ENCODE measurements at regions of chr3 and their contacts with region 1.

Region 1: DNA sequence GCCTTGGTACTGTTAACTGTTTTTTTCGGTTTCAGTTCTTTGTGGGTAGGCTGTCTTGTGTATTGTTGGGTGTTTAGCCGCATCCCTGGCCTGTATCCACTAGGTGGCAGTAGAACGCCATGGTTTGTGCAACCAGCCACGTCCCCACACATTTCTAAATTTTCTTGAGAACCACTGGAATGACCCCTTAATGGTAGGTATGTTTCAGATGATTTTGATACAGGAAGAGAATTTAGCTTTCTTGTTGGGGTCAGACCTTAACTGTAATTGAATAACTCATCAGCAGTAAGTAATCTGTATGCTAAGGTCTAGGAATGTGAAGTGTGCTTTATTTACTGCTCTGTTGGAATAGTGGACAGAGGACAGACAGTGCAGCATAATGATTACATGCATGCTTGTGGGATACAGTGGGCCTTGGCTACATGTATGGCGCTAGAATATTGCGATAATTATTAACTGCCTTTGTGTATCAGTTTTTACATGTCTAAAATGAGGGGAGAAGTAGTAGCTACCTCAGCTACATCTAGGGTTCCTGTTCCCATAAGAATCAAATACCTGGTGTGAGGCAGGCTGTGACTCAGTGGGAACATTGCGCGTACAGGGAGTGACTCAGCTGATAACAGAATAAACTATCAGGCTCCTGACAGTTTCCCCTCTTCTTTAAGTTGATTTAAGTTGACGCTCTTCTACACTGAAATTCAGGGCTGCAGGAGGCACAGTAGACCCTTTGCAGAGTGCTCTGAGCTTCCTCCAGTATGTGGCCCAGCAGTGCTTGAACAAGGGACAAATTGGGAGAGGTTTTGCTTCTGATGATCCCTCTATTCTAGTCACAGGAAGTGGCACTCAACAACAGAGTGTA is 25.0 kb upstream of the GPR171 start:
- DNase-seq: peak; percentile 84
- H3K4me3 Mint-ChIP-seq: no peak overlapping the region
- H3K27ac Mint-ChIP-seq: no peak overlapping the region
- H3K4me1 Mint-ChIP-seq: peaks cover 18% of the 10 kb centered on the region
- H3K27me3 Mint-ChIP-seq: no peaks in the 10 kb centered on the region
- CTCF ChIP-seq: peak; percentile 81

Region 2: GRCh38 chr3:151168269-151169094 is 59.6 kb before region 1 on chr3:
- CTCF ChIA-PET with region 1: interaction called, 43 read pairs
- POLR2A ChIA-PET with region 1: interaction called, 3 read pairs
- intact Hi-C with region 1: loop called (anchors 1 kb)
- DNase-seq: peak; percentile 82
- H3K4me3 Mint-ChIP-seq: no peak overlapping the region
- H3K27ac Mint-ChIP-seq: no peak overlapping the region
- H3K4me1 Mint-ChIP-seq: no peaks in the 10 kb centered on the region
- H3K27me3 Mint-ChIP-seq: no peaks in the 10 kb centered on the region
- CTCF ChIP-seq: peak; percentile 88

Region 3: DNA sequence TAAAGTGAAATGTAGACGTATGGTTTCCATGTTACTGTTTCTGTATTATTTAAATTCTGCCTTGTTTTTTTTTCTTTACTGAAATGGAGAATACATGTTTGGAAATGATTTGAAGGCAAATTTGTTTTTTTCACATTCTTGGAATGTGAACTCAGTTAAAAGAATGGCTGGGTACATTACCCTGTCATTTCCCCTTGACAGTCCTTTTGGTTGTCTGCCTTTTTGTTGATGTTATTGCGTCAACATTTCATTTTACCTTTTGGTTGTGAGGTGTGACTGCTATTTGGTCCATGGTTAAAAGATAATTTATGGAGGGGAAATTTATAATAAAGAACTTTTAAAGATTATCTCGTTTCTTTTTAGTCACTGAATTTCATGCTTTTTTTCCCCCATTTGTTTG is 21.8 kb before region 1 on chr3:
- CTCF ChIA-PET with region 1: interaction called, 13 read pairs
- POLR2A ChIA-PET with region 1: no interaction called
- intact Hi-C with region 1: no loop called
- DNase-seq: no peak
- H3K4me3 Mint-ChIP-seq: no peak overlapping the region
- H3K27ac Mint-ChIP-seq: no peak overlapping the region
- H3K4me1 Mint-ChIP-seq: no peaks in the 10 kb centered on the region
- H3K27me3 Mint-ChIP-seq: no peaks in the 10 kb centered on the region
- CTCF ChIP-seq: no peak

Region 4: DNA sequence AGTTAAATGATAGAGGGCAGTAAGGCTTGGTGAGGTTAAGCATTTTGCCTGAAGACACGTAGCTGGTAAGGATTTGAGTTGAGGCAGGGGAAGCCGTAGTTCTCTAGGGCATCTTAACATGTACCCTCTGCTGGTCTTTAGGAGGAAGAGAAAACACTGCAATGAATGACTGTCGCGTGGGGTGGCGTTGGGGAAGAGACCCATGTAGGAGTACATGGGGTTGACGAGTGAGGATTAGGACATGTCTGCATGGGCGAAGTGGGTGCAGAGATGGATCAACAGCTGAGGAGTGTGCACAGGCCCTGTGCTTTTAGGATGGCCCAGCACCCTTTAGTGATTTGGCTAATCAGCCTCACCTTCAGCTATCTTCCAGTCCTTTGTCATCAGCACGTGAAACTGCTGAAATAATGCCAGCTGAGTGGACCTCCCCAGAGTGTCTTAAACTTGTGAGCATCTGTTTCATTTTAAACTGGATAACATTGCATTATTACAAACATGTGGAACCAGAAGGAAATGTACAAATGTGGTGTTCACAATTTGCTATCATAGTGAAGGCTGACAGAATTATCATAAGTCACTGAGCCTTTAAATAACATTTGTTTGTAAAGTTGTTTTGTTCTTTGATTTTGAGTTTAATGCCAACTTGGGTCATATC is 35.0 kb after region 1 on chr3:
- CTCF ChIA-PET with region 1: interaction called, 18 read pairs
- POLR2A ChIA-PET with region 1: no interaction called
- intact Hi-C with region 1: no loop called
- DNase-seq: no peak
- H3K4me3 Mint-ChIP-seq: no peak overlapping the region
- H3K27ac Mint-ChIP-seq: no peak overlapping the region
- H3K4me1 Mint-ChIP-seq: no peaks in the 10 kb centered on the region
- H3K27me3 Mint-ChIP-seq: no peaks in the 10 kb centered on the region
- CTCF ChIP-seq: no peak

Region 5: DNA sequence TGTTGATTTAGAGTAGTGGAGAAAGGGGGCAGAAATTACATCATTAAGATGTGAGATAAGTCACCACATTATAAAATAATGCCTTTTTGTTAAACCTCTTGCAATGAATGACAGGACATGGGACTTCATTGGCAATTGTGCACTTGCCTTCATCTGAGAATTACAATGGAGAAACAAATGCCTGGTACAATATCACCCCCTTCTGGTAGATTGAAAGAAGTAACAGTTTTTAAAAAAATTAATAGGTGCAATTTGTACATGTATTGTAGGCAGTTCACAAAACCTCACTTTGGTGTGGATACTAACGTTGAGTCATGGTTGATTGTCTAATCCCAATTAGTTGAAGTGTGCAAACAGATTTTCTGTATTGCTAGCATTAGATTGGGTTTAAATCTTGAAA is 54.9 kb after region 1 on chr3:
- CTCF ChIA-PET with region 1: interaction called, 107 read pairs
- POLR2A ChIA-PET with region 1: interaction called, 4 read pairs
- intact Hi-C with region 1: loop called (anchors 1 kb)
- DNase-seq: peak; percentile 73
- H3K4me3 Mint-ChIP-seq: no peak overlapping the region
- H3K27ac Mint-ChIP-seq: no peak overlapping the region
- H3K4me1 Mint-ChIP-seq: no peaks in the 10 kb centered on the region
- H3K27me3 Mint-ChIP-seq: no peaks in the 10 kb centered on the region
- CTCF ChIP-seq: peak; percentile 67

Region 6: DNA sequence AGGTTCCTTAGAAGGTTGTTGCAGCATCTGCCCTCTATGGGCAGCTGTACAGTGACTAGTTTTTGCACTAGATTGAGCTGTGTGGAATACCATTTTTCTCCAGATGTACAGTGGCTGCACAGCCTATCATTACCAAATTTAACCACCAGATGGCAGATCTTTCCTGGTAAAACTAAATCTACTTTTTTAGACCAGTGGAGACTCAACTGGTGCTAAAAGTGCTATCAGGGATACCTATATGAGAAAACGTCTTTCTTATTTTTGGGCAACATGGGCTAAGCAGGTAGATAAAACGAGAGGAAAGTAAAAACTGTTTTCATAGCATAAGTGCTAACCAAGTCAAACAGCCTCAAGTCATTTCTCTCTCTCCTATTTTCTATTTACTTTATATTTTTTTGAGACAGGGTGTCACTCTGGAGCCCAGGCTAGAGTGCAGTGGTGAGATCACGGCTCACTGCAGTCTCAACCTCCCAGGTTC is 211.7 kb after region 1 on chr3:
- CTCF ChIA-PET with region 1: interaction called, 11 read pairs
- POLR2A ChIA-PET with region 1: no interaction called
- intact Hi-C with region 1: loop called (anchors 5 kb)
- DNase-seq: peak; percentile 67
- H3K4me3 Mint-ChIP-seq: no peak overlapping the region
- H3K27ac Mint-ChIP-seq: no peak overlapping the region
- H3K4me1 Mint-ChIP-seq: no peaks in the 10 kb centered on the region
- H3K27me3 Mint-ChIP-seq: no peaks in the 10 kb centered on the region
- CTCF ChIP-seq: peak; percentile 42

Region 7: DNA sequence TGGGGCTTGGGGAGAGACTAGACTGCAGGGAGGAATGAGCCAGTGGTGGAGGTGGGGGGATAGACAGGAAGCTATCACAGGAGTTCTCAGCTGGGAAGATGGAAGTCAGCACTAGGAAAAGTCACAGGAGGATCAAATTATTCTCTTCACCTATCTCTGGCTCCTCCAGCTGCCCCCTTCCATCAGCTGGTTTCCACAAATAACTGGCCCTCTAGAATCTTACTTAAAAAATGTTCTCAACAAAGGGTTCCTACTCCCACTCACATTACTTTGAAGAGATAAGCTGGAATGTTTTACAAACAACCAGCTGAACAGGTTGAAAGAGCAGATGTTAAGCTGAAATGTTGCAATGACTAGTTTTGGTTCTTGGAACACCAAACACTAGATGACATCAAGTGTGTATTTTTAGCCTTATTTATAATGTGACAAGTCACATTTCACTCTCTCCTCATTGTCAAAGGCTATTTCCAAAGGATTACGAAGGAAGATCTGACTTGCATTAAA is 403.0 kb after region 1 on chr3:
- CTCF ChIA-PET with region 1: no interaction called
- POLR2A ChIA-PET with region 1: no interaction called
- intact Hi-C with region 1: no loop called
- DNase-seq: no peak
- H3K4me3 Mint-ChIP-seq: no peak overlapping the region
- H3K27ac Mint-ChIP-seq: no peak overlapping the region
- H3K4me1 Mint-ChIP-seq: peaks cover 6% of the 10 kb centered on the region
- H3K27me3 Mint-ChIP-seq: no peaks in the 10 kb centered on the region
- CTCF ChIP-seq: no peak

Measured in MCF 10A (cell line).